Left ventricle myocardium inferior (tissue), 1 donor: ENCODE measurements at regions of chr4 and their contacts with region 1.

Region 1: DNA sequence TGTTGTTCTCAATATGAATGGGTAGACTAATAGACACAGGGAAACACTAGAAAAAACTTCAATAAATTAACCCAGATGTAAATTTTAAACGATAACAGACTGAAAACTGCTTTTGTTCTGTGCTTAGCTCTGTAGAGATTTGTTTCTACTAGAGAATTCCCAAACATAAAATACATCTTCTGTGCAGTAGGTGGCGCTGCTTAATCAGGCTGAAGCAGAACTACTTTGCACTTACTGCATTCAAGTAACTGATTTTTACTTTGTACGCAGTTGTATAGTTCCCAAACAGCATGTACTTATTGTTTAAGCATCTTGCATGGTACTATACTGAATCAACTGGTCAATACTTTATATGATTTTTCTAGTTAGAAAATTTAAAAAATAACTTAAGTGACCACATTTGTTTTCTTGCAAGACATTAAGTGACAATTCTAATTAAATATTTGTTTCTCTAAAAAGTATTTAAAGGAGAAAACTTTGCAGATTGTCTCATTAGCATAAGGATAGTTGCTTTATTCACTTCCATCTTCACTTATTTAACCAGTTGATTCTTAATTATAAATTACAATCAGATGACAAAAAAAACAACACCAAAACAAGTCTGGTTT is 490.6 kb downstream of the IL15 start:
- DNase-seq: no peak
- H3K4me3 ChIP-seq: no peak overlapping the region
- H3K27ac ChIP-seq: no peak overlapping the region
- H3K4me1 ChIP-seq: peaks cover 29% of the 10 kb centered on the region
- H3K27me3 ChIP-seq: no peaks in the 10 kb centered on the region
- CTCF ChIP-seq: peak; percentile 90

Region 2: DNA sequence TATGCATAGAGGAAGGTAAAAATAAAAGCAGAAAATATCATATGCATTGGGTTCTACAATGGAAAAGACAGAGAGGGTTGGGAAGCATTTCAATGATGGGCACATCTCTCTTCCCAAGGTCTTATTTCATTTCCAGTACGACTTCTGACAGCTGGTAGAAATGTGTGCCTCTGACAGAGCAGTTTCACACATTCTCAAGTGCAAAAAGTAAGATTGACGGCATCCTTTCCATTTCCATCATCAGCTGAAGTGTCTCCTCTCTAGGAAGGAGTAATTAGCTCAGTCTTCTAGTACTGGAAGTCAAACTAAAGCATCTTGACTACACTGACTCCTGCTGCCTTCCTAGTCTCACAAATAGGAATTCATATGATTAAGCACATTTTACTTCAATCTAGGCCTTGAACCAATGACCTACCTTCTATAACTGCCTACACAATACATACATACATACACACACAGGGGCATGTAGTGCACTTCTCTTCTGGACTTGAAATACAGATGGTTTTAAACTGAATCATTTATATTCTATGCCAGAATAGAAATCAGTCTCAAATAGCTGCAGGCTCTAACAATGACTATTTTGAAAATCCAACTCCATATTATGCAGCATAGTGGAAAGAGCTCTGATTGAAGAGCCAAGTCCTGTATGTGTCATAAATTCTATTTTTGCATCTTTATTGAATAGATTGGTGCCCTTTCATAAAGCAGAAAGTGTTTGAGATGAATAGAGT is 245.7 kb after region 1 on chr4:
- intact Hi-C with region 1: no loop called
- DNase-seq: no peak
- H3K4me3 ChIP-seq: no peak overlapping the region
- H3K27ac ChIP-seq: peak overlapping the region; percentile 31
- H3K4me1 ChIP-seq: peaks cover 61% of the 10 kb centered on the region
- H3K27me3 ChIP-seq: no peaks in the 10 kb centered on the region
- CTCF ChIP-seq: no peak

Region 3: DNA sequence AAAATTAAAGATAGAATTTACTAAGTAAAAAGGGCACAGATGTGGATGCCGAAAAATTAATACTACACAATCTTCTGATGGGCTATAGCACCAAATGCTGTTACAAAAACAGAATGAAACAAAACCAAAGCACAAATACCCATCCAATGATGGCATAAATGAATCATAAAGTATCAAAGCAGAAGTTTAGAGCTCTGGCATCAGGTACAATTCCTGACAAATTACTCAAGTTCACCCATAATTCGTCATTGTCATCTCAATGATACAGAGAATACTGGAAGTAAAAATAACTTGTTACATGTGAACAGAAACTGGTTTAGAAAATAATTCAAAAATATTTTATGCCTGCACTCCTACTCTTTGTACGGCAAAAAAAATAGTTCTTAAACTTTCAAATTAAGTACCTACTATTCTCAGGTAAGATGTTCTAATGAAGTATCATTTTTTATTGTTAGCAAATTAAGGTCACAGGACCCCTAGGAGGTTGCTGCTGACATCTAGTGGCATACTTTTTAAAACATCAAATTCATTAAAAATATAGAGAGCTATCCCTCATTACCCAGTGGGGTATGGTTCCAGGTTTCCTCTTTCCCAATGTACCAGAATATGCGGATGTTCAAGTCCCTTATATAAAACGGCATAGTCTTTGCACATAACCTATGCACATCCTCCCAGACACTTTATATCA is 593.0 kb after region 1 on chr4:
- intact Hi-C with region 1: loop called (anchors 10 kb)
- DNase-seq: no peak
- H3K4me3 ChIP-seq: no peak overlapping the region
- H3K27ac ChIP-seq: no peak overlapping the region
- H3K4me1 ChIP-seq: no peaks in the 10 kb centered on the region
- H3K27me3 ChIP-seq: no peaks in the 10 kb centered on the region
- CTCF ChIP-seq: peak; percentile 63

Region 4: DNA sequence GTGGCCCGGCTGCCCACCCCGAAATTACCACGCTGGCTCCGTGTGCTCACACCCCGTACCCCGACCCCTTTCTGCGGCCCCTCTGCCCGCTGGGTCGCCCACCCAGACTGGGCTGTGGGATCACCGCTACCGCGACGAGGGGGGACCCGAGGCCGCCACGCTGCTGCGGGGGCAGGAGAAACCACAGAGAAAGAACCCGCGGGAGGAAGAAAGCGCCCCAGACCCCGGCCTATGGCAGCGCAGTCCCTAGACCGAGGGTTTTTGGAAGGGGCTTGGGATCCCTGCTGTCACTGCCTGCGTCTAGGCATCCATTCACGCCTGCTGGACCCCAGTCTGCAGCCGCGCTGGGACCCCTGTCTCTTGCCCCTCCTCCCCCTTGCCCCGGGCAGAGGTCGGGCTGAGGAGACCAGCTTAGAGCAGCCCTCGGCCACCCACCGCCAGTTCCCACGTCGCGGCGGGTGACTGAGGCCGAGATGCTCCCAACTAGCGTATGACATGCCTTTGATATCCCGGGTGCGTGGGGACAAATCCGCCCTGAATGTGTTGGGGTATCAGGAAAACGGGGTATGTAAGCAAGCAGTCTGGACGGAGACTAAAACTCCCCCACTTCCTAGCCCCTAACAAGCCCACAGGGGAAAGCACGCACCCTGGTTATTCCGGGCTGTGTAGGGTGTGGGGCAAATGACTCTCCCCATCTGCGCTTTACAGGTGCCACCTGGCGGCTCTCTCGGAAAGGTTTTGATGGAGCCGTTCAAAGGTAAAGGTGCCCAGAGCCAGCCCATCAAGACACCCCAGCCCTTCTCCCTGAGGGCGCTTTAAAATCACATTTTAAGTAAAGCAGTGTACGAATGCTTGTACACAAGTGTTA is 720.0 kb after region 1 on chr4:
- intact Hi-C with region 1: loop called (anchors 10 kb)
- DNase-seq: peak; percentile 30
- H3K4me3 ChIP-seq: peak overlapping the region; percentile 81
- H3K27ac ChIP-seq: peak overlapping the region; percentile 91
- H3K4me1 ChIP-seq: peaks cover 39% of the 10 kb centered on the region
- H3K27me3 ChIP-seq: peaks cover 37% of the 10 kb centered on the region
- CTCF ChIP-seq: peak; percentile 53